Adrenal gland (tissue), 19 donors: ENCODE measurements at regions of chr1 and their contacts with region 1.

Region 1: GRCh38 chr1:21232044-21232443 is 55.3 kb upstream of the EIF4G3 start:
- DNase-seq: peak in 6 of 7 donors; percentile 43 to 80 (median 63)
- H3K4me3 ChIP-seq: no peak overlapping the region
- H3K27ac ChIP-seq: peak overlapping the region in 1 of 5 donors; percentile 39
- H3K4me1 ChIP-seq: no peaks in the 10 kb centered on the region
- H3K27me3 ChIP-seq: no peaks in the 10 kb centered on the region
- CTCF ChIP-seq: peak; percentile 75 to 94 (median 86)
- POLR2A ChIP-seq: no peak

Region 2: GRCh38 chr1:21200767-21201166 is 31.3 kb before region 1 on chr1:
- intact Hi-C with region 1: no loop called
- DNase-seq: no peak
- H3K4me3 ChIP-seq: no peak overlapping the region
- H3K27ac ChIP-seq: no peak overlapping the region
- H3K4me1 ChIP-seq: no peaks in the 10 kb centered on the region
- H3K27me3 ChIP-seq: no peaks in the 10 kb centered on the region
- CTCF ChIP-seq: no peak
- POLR2A ChIP-seq: no peak

Region 3: DNA sequence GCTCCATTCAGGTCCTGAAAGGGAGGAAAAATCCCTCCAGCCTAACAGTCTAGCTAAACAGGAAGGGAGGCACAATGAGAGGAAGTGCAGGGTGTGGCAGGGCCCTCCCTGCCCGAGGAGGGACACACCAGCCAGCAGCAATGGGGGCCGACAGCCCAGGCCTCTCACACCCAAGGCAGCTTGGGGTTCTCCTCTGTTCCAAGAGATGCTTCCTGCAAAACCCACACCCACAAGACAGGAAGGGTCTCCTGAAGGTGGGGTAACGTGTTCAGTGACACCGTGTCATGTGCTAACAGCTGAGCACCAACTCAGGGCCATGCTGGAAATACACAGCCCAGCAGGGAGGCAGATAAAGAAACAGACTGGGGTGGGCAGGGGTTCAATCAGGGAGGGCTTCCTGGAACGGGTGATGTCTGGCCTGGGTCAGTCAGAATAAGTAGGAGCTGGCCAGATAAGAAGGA is 48.0 kb after region 1 on chr1:
- intact Hi-C with region 1: no loop called
- DNase-seq: peak in 3 of 7 donors; percentile 42 to 59 (median 53)
- H3K4me3 ChIP-seq: no peak overlapping the region
- H3K27ac ChIP-seq: peak overlapping the region; percentile 28 to 93 (median 83)
- H3K4me1 ChIP-seq: peaks cover 28 to 65% of the 10 kb centered on the region in 2 donors
- H3K27me3 ChIP-seq: no peaks in the 10 kb centered on the region
- CTCF ChIP-seq: no peak
- POLR2A ChIP-seq: no peak

Region 4: GRCh38 chr1:21368515-21369289 is 136.7 kb after region 1 on chr1:
- intact Hi-C with region 1: loop called (anchors 2 to 5 kb)
- DNase-seq: peak; percentile 81 to 91 (median 85)
- H3K4me3 ChIP-seq: no peak overlapping the region
- H3K27ac ChIP-seq: no peak overlapping the region
- H3K4me1 ChIP-seq: peaks cover 0 to 6% of the 10 kb centered on the region in 2 donors
- H3K27me3 ChIP-seq: no peaks in the 10 kb centered on the region
- CTCF ChIP-seq: peak; percentile 98 to 100 (median 100)
- POLR2A ChIP-seq: peak in 1 of 2 donors; percentile 31

Region 5: GRCh38 chr1:21651214-21652042 is 419.4 kb after region 1 on chr1:
- intact Hi-C with region 1: loop called (anchors 5 to 10 kb)
- DNase-seq: peak in 1 of 7 donors; percentile 65
- H3K4me3 ChIP-seq: peak overlapping the region in 1 of 4 donors; percentile 63
- H3K27ac ChIP-seq: peak overlapping the region in 3 of 5 donors; percentile 7 to 78 (median 68)
- H3K4me1 ChIP-seq: peaks cover 6 to 20% of the 10 kb centered on the region in 2 donors
- H3K27me3 ChIP-seq: no peaks in the 10 kb centered on the region
- CTCF ChIP-seq: no peak
- POLR2A ChIP-seq: no peak